ENCODE measurements at regions of chr18 and their contacts with region 1.

Region 1: GRCh38 chr18:48540251-48541025 is 1.6 kb downstream of the CTIF start:
- DNase-seq: peak; percentile 58
- H3K4me3 ChIP-seq: peak overlapping the region; percentile 60 to 66
- H3K27ac ChIP-seq: peak overlapping the region; percentile 88 to 89
- H3K4me1 ChIP-seq: peaks cover 2% of the 10 kb centered on the region
- H3K27me3 ChIP-seq: no peaks in the 10 kb centered on the region
- CTCF ChIP-seq: no peak
- POLR2A ChIP-seq: peak; percentile 13

Region 2: GRCh38 chr18:48263913-48264902 is 276.2 kb before region 1 on chr18:
- intact Hi-C with region 1: no loop called
- DNase-seq: no peak
- H3K4me3 ChIP-seq: no peak overlapping the region
- H3K27ac ChIP-seq: no peak overlapping the region
- H3K4me1 ChIP-seq: no peaks in the 10 kb centered on the region
- H3K27me3 ChIP-seq: no peaks in the 10 kb centered on the region
- CTCF ChIP-seq: no peak
- POLR2A ChIP-seq: no peak

Region 3: GRCh38 chr18:48475635-48476549 is 64.5 kb before region 1 on chr18:
- intact Hi-C with region 1: loop called (anchors 5 kb)
- DNase-seq: peak; percentile 42
- H3K4me3 ChIP-seq: no peak overlapping the region
- H3K27ac ChIP-seq: no peak overlapping the region
- H3K4me1 ChIP-seq: no peaks in the 10 kb centered on the region
- H3K27me3 ChIP-seq: no peaks in the 10 kb centered on the region
- CTCF ChIP-seq: peak; percentile 66 to 82 (median 78)
- POLR2A ChIP-seq: no peak

Region 4: DNA sequence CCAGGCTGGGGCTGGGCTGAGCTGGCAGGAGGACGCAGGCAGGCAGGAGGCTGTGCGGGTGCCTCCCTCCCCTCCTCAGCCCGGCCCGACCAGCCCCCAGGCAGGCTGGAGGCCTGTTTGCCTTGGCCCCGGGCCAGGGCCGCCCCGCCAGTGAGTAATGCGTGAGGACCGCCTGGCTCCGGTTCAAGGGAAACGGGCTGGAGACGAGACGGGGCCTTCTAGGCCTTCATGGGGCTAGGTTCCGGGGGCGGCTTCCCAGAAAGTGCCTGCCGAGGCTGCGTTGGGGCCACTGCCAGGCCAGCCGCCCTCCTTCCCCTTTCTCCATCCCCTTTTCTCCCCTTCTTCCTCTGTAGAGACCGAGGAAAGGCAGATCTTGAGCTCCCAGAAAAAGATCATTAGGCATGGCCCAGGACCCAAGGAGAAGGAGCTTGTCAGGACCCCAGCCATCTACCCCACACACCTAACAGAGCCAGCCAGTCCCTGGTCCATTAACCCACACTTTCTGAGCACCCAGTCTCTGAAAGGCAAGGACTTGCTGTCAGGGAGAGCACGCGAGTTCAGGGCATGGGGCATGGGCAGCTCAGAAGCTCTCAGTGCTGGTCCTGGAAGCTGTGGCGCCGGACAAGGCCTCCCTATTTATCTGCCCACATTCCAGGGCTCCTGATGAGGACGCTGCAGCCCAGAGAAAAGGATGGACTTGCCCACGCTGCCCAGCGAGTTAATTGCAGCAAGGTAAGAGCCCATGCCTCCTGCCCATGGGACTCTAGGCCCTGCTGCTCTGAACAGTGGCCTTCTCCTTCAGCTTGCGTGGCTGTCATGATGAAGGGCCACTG is 361.8 kb after region 1 on chr18:
- intact Hi-C with region 1: no loop called
- DNase-seq: peak; percentile 56
- H3K4me3 ChIP-seq: no peak overlapping the region
- H3K27ac ChIP-seq: peak overlapping the region; percentile 28 to 63
- H3K4me1 ChIP-seq: no peaks in the 10 kb centered on the region
- H3K27me3 ChIP-seq: no peaks in the 10 kb centered on the region
- CTCF ChIP-seq: no peak
- POLR2A ChIP-seq: no peak

Measured in prostate gland (tissue), 2 donors.